ENCODE measurements at regions of chr18 and their contacts with region 1.

Region 1: DNA sequence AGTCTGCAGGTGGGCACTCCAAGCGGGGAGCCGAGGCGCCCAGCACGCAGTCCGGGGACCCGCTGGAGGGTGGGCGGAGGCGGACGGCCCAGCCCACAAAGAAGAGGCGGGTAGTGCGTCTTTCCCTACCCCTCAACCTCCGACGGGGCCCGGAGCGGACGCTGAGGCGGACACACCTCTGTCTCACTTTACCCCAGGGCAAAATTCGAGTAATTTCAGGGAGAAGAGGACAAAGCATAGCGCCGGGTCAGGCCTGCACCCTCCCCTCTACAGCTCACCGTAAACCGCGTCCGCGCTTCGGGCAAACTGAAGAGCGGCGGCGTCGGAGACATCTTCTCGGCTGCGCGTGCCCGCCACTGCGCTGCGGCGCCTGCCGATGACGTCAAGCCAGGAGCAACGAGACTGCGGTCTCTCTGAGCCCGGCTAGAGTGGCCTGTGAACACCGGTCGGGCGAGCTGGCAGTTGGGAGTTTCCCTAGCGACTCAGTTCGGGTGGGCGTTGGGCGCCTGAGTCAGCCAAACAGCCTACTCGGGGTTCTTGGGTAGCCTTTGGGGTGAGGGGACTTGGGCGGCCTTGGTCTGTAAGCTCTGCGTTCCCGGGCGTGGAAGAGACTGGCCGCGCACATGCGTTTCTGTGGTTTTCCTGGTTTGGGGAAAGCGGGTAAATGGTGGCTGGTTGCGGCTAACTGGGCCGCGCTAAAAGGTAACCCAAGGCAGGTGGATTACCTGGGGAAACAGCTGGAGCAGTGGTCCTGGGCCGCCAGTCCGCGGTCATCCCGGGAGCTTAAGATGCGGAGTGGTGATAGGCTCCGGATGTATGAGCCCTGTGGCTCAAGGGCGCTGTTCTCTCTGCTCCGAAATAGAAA is at the start of gene THOC1:
- DNase-seq: peak; percentile 87 to 96 (median 95)
- ATAC-seq: peak; percentile 90
- H3K4me3 ChIP-seq: peak within 1 kb of the TSS; percentile 90 to 98
- H3K4me3 Mint-ChIP-seq: peak within 1 kb of the TSS; percentile 99
- H3K27ac ChIP-seq: peak within 1 kb of the TSS; percentile 93 to 99
- H3K27ac Mint-ChIP-seq: peak within 1 kb of the TSS; percentile 100
- H3K4me1 ChIP-seq: peaks cover 12% of the 10 kb centered on the region
- H3K4me1 Mint-ChIP-seq: peaks cover 44% of the 10 kb centered on the region
- H3K27me3 ChIP-seq: no peaks in the 10 kb centered on the region
- H3K27me3 Mint-ChIP-seq: no peaks in the 10 kb centered on the region
- CTCF ChIP-seq: no peak
- total RNA-seq, gene THOC1: 114 to 128 TPM

Region 2: GRCh38 chr18:158128-159036 is 109.5 kb before region 1 on chr18 and contains the start of gene USP14:
- CTCF ChIA-PET with region 1: interaction called, 4 read pairs
- POLR2A ChIA-PET with region 1: interaction called, 21 read pairs
- intact Hi-C with region 1: loop called (anchors 1 kb)
- DNase-seq: peak; percentile 93 to 99 (median 97)
- ATAC-seq: peak; percentile 92
- H3K4me3 ChIP-seq: peak within 1 kb of the TSS; percentile 64 to 81
- H3K4me3 Mint-ChIP-seq: peak within 1 kb of the TSS; percentile 88
- H3K27ac ChIP-seq: peak within 1 kb of the TSS; percentile 59 to 83
- H3K27ac Mint-ChIP-seq: peak within 1 kb of the TSS; percentile 95
- H3K4me1 ChIP-seq: peaks cover 22% of the 10 kb centered on the region
- H3K4me1 Mint-ChIP-seq: peaks cover 35% of the 10 kb centered on the region
- H3K27me3 ChIP-seq: no peaks in the 10 kb centered on the region
- H3K27me3 Mint-ChIP-seq: no peaks in the 10 kb centered on the region
- CTCF ChIP-seq: no peak
- total RNA-seq, gene USP14: 61.3 to 64.1 TPM

Region 3: GRCh38 chr18:199768-200167 is 68.2 kb before region 1 on chr18:
- CTCF ChIA-PET with region 1: no interaction called
- POLR2A ChIA-PET with region 1: no interaction called
- intact Hi-C with region 1: no loop called
- DNase-seq: no peak
- ATAC-seq: no peak
- H3K4me3 ChIP-seq: no peak overlapping the region
- H3K4me3 Mint-ChIP-seq: no peak overlapping the region
- H3K27ac ChIP-seq: no peak overlapping the region
- H3K27ac Mint-ChIP-seq: no peak overlapping the region
- H3K4me1 ChIP-seq: no peaks in the 10 kb centered on the region
- H3K4me1 Mint-ChIP-seq: peaks cover 10% of the 10 kb centered on the region
- H3K27me3 ChIP-seq: no peaks in the 10 kb centered on the region
- H3K27me3 Mint-ChIP-seq: no peaks in the 10 kb centered on the region
- CTCF ChIP-seq: no peak

Measured in CD8-positive, alpha-beta T cell (primary cell).